Ovary (tissue), 10 donors: ENCODE measurements at regions of chr13 and their contacts with region 1.

Region 1: DNA sequence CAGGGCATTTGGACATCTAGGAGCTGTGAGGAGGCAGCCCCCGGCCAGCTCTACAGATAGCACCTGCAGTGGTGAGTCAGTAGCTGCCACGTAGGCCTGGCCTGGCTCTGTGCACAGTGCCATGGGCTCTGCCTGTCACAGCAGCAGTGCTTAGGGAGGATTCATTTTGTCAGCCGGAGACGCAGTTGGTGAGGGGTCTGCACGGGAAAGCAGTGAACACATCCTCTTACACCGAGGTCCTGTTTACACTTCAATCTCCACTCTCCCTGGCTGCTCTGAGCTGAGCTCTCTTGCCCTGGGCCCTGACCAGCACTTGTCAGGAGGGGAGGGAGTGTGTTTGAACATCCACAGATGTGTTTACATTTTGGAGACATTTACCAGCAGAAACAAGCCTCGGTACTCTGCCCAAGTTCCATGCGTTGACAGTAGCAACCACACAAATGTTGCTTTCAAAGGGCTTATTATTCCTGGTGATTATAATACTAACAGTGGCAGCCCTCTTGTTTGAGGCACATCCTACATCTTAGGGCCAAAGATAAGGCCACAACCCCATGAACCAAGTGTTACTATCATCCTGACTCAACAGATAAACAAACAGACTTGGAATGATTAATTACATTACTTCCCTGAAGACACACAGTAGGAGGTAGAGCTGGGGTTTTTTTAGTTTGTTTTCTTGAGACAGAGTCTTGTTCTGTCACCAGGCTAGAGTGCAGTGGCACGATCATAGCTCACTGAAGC is 148.9 kb downstream of the USP12 start:
- DNase-seq: no peak
- H3K4me3 ChIP-seq: no peak overlapping the region
- H3K27ac ChIP-seq: no peak overlapping the region
- H3K4me1 ChIP-seq: peaks cover 4% of the 10 kb centered on the region
- H3K27me3 ChIP-seq: no peaks in the 10 kb centered on the region
- CTCF ChIP-seq: no peak
- EP300 ChIP-seq: no peak
- POLR2A ChIP-seq: no peak

Region 2: GRCh38 chr13:26062844-26063444 is 959.8 kb before region 1 on chr13:
- intact Hi-C with region 1: no loop called
- DNase-seq: no peak
- H3K4me3 ChIP-seq: no peak overlapping the region
- H3K27ac ChIP-seq: no peak overlapping the region
- H3K4me1 ChIP-seq: no peaks in the 10 kb centered on the region
- H3K27me3 ChIP-seq: no peaks in the 10 kb centered on the region
- CTCF ChIP-seq: peak in 1 of 3 donors; percentile 10
- EP300 ChIP-seq: no peak
- POLR2A ChIP-seq: no peak

Region 3: DNA sequence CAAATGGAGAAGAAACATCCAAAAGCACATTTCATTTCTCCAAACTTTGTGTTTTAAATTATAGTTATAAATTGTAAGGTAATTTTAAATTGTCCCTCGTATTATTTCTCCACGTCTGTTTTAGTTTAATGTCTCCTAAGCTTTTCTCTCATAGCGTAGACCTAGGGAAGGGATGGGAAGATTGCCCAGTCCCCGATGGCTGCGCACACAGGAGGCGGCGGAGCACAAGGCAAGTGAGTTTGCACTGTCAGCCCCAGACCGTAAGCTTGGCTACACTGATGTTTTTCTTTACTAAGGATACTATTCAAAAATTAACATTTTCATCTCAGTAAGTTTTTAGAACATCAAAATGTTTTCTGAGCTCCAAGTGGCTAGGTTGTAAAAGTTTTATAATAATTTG is 334.5 kb before region 1 on chr13:
- intact Hi-C with region 1: no loop called
- DNase-seq: no peak
- H3K4me3 ChIP-seq: no peak overlapping the region
- H3K27ac ChIP-seq: no peak overlapping the region
- H3K4me1 ChIP-seq: no peaks in the 10 kb centered on the region
- H3K27me3 ChIP-seq: no peaks in the 10 kb centered on the region
- CTCF ChIP-seq: no peak
- EP300 ChIP-seq: no peak
- POLR2A ChIP-seq: no peak

Region 4: DNA sequence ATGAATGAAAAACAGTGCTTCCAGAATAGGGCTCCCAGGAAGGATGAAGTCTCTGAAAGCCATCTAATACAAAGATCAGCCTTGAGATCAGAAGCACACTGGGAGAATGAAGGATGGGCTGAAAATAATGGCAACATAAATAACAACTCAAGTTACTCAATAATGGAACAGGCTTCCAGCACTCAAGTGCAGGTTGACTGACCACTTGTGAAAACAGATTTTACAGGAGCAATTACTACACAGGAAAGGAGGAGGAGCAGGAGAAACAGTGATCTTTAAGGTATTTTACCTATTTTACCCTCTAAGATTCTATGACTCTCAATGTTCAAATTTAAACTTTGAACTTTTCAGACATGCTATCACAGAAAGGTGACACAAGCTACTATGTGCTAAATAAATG is 42.8 kb after region 1 on chr13:
- intact Hi-C with region 1: loop called in 1 of 4 experiments (anchors 1 kb)
- DNase-seq: no peak
- H3K4me3 ChIP-seq: no peak overlapping the region
- H3K27ac ChIP-seq: no peak overlapping the region
- H3K4me1 ChIP-seq: no peaks in the 10 kb centered on the region
- H3K27me3 ChIP-seq: no peaks in the 10 kb centered on the region
- CTCF ChIP-seq: no peak
- EP300 ChIP-seq: no peak
- POLR2A ChIP-seq: no peak